ENCODE measurements at regions of chr7 and their contacts with region 1.

Region 1: GRCh38 chr7:155533827-155534690 is 12.3 kb downstream of the CNPY1 start:
- DNase-seq: no peak
- H3K4me3 Mint-ChIP-seq: no peak overlapping the region
- H3K27ac Mint-ChIP-seq: no peak overlapping the region
- H3K4me1 Mint-ChIP-seq: peaks cover 7% of the 10 kb centered on the region
- H3K27me3 Mint-ChIP-seq: peaks cover 67% of the 10 kb centered on the region

Region 2: GRCh38 chr7:155380221-155380861 is 153.7 kb before region 1 on chr7:
- intact Hi-C with region 1: loop called (anchors 1 kb)
- DNase-seq: peak; percentile 57
- H3K4me3 Mint-ChIP-seq: no peak overlapping the region
- H3K27ac Mint-ChIP-seq: no peak overlapping the region
- H3K4me1 Mint-ChIP-seq: peaks cover 15% of the 10 kb centered on the region
- H3K27me3 Mint-ChIP-seq: peaks cover 83% of the 10 kb centered on the region

Region 3: GRCh38 chr7:155456738-155457564 is 77.1 kb before region 1 on chr7:
- intact Hi-C with region 1: loop called (anchors 5 kb)
- DNase-seq: no peak
- H3K4me3 Mint-ChIP-seq: peak overlapping the region; percentile 37
- H3K27ac Mint-ChIP-seq: peak overlapping the region; percentile 67
- H3K4me1 Mint-ChIP-seq: peaks cover 9% of the 10 kb centered on the region
- H3K27me3 Mint-ChIP-seq: peaks cover 68% of the 10 kb centered on the region

Region 4: GRCh38 chr7:155466814-155467733 is 67.0 kb before region 1 on chr7:
- intact Hi-C with region 1: loop called (anchors 2 kb)
- DNase-seq: peak; percentile 38
- H3K4me3 Mint-ChIP-seq: no peak overlapping the region
- H3K27ac Mint-ChIP-seq: no peak overlapping the region
- H3K4me1 Mint-ChIP-seq: peaks cover 3% of the 10 kb centered on the region
- H3K27me3 Mint-ChIP-seq: peaks cover 81% of the 10 kb centered on the region

Region 5: GRCh38 chr7:155509725-155510551 is 24.1 kb before region 1 on chr7:
- intact Hi-C with region 1: loop called (anchors 1 kb)
- DNase-seq: no peak
- H3K4me3 Mint-ChIP-seq: peak overlapping the region; percentile 47
- H3K27ac Mint-ChIP-seq: no peak overlapping the region
- H3K4me1 Mint-ChIP-seq: peaks cover 16% of the 10 kb centered on the region
- H3K27me3 Mint-ChIP-seq: peaks cover 80% of the 10 kb centered on the region

Region 6: GRCh38 chr7:155860840-155861479 is 326.9 kb after region 1 on chr7:
- intact Hi-C with region 1: no loop called
- DNase-seq: no peak
- H3K4me3 Mint-ChIP-seq: no peak overlapping the region
- H3K27ac Mint-ChIP-seq: no peak overlapping the region
- H3K4me1 Mint-ChIP-seq: no peaks in the 10 kb centered on the region
- H3K27me3 Mint-ChIP-seq: no peaks in the 10 kb centered on the region

Region 7: DNA sequence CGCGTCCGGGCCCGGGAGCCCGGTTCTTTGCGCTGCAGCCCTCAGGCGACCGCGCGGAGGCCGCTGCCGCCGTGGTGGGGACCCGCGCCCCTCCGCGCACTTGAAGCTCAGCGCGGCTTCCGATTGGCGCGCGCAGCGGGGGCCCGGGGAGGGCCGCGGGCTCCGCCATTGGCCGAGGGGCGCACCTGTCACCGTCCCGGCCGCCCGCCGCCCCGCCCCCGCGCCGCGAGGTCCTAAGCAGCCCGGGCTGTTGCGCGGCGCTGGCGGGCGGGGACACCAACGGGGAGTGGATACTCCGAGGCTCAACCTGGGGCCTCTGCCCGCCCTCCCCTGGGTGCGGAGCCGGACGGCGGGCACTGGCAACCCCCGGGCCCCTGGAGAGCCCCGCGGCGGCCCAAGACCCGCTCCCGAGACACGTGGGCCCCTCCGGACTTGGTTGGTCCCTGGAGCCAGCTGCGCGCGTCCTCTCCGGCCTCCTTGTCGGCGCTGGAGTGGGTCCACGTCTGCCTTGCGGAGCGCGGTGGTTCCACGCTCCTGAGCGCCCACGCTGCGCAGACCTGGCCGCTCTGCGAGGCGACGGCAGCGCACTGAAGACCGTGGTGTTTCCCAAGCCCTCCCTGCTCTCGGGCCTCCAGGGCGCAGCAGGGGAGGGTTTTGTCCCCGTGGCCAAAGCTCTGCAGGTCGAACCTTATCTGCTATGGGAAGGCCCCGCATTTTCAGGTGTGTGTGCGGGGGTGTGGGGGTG is 1476.7 kb after region 1 on chr7 and contains the start of gene MNX1:
- intact Hi-C with region 1: loop called (anchors 5 kb)
- DNase-seq: peak; percentile 43
- H3K4me3 Mint-ChIP-seq: peak within 1 kb of the TSS; percentile 39
- H3K27ac Mint-ChIP-seq: no peak within 1 kb of the TSS
- H3K4me1 Mint-ChIP-seq: peaks cover 6% of the 10 kb centered on the region
- H3K27me3 Mint-ChIP-seq: peaks cover 72% of the 10 kb centered on the region
- total RNA-seq, gene MNX1: 0.09 TPM in 1 of 2 replicates, not detected in the other

Measured in activated T-helper 2 cell treated with anti-CD3 and anti-CD28 coated beads, Interferon-gamma antibody, Interleukin-2, Interleukin-4, amounts not matched to agents 10 μg/mL and 5 μg/mL and 100 μg/mL, durations not matched to agents 14 hours and 24 hours and 36 hours (primary cell).